MCF 10A (cell line): ENCODE measurements at regions of chr11 and their contacts with region 1.

Region 1: DNA sequence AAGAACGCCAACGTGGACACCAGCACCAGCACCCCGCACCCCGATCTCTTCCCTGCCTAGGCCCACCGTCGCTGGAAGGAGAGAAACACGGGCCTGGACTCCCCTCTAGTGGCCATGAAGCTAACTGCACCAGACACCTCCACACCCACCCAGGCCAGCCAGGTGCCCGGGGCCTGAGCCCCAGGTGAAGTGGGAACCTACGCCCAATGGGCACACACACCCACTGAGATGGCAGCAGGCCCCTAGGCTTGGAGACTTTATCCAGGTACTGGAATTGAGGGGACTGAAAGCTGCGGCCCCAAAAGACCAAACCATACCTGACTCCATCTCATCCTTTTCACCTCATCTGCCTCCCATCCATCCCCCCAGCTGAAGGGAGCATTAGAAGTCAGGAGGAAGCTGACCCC is 81.0 kb downstream of the BUD13 start:
- DNase-seq: peak; percentile 57
- H3K4me3 Mint-ChIP-seq: no peak overlapping the region
- H3K27ac Mint-ChIP-seq: no peak overlapping the region
- H3K4me1 Mint-ChIP-seq: peaks cover 17% of the 10 kb centered on the region
- H3K27me3 Mint-ChIP-seq: peaks cover 17% of the 10 kb centered on the region
- CTCF ChIP-seq: peak; percentile 92

Region 2: DNA sequence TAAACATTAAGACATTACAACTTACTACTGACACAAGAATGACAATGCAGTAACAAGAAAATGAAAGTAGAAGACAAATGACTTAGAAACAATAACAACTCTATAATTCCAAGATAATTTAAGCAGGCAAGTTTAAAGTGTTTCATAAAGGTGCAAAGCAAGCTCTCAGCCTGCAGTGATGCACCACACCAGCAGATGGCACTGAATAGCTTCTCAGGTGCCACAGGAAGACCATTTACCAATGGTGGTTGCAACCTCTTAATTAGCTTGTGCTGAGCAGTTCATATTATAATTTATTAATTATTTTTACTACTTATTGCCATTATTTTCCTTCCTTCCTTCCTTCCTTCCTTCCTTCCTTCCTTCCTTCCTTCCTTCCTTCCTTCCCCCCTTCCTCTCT is 1952.8 kb before region 1 on chr11:
- CTCF ChIA-PET with region 1: interaction called, 4 read pairs
- POLR2A ChIA-PET with region 1: no interaction called
- intact Hi-C with region 1: loop called (anchors 1 kb)
- DNase-seq: peak; percentile 63
- H3K4me3 Mint-ChIP-seq: no peak overlapping the region
- H3K27ac Mint-ChIP-seq: no peak overlapping the region
- H3K4me1 Mint-ChIP-seq: no peaks in the 10 kb centered on the region
- H3K27me3 Mint-ChIP-seq: peaks cover 20% of the 10 kb centered on the region
- CTCF ChIP-seq: peak; percentile 76

Region 3: DNA sequence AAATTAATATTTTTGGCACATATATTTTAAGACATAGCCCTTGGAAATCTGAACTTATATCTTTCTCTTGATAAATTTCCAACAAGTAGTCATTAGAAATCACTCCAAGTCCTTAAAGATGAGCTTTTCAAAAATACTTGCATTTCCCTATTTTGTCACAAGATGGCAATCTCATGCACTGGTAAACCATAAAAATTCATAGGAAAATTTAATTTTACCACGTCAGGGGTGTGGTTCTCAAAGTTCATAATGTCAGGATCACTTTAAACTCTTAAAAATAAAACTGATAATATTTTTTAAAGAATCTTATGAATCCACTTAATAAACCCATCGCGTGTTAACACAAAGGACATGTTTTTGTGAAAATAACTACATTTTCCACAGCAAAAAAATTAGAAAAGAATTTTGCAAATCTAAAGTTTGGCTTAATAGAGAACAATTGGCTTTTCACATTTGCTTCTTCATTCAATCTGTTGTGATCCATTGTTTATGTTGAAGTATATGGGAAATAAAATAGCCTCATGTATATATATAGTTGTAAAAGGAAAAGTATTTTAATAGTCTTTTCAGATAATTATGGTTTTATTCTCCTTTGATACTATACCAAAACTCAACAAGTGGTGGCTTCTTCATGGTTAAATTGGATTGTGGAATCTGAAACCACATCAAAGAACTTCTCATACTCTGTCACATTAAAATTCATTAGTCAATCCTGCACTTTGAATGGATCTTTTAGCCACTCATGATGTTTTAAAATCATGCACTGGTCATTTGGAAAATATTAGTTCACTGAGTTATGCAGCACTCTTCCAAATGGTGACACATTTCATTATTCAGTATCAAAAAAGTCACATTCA is 1356.6 kb before region 1 on chr11:
- CTCF ChIA-PET with region 1: interaction called, 14 read pairs
- POLR2A ChIA-PET with region 1: no interaction called
- intact Hi-C with region 1: loop called (anchors 2 kb)
- DNase-seq: peak; percentile 31
- H3K4me3 Mint-ChIP-seq: no peak overlapping the region
- H3K27ac Mint-ChIP-seq: no peak overlapping the region
- H3K4me1 Mint-ChIP-seq: no peaks in the 10 kb centered on the region
- H3K27me3 Mint-ChIP-seq: peaks cover 35% of the 10 kb centered on the region
- CTCF ChIP-seq: peak; percentile 48

Region 4: DNA sequence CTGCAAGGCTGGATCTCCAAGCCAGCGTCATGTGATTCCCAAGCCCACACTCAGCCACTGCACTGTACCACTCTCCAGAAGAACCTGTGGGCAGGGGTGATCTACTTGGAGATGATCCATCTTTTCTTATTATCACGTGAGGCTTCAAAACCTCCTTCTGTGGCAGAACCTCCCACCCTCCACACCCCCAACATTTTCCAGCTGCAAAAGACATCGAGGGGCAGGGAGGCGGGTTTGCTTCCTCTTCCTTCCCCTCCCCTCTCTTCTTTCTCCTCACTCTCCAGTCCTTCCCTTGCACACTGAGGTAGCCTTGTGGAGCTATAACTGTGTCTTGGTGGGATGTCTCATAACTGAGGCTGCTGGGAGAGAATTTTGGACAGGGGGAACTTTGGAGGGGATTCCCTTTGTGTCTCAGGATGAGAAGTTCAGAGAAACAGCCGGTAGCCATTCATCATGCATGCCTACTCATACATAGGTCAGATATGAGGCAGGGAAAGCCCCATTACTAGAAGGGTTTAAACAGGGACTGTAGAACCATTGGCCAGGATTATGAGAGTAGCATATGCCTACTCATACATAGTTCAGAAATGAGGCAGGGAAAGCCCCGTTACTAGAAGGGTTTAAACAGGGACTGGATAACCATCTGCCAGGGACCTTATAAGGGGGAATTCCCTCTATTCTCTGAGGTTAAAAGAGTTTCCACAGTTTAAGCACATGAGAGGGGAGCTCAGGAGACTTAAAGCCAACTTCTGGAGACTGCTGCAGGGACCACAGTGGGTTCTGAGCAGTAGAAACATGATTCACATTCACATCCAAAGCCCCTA is 766.8 kb before region 1 on chr11:
- CTCF ChIA-PET with region 1: no interaction called
- POLR2A ChIA-PET with region 1: no interaction called
- intact Hi-C with region 1: no loop called
- DNase-seq: no peak
- H3K4me3 Mint-ChIP-seq: no peak overlapping the region
- H3K27ac Mint-ChIP-seq: no peak overlapping the region
- H3K4me1 Mint-ChIP-seq: no peaks in the 10 kb centered on the region
- H3K27me3 Mint-ChIP-seq: no peaks in the 10 kb centered on the region
- CTCF ChIP-seq: no peak

Region 5: GRCh38 chr11:116513894-116514293 is 177.9 kb before region 1 on chr11:
- CTCF ChIA-PET with region 1: interaction called, 6 read pairs
- POLR2A ChIA-PET with region 1: no interaction called
- intact Hi-C with region 1: loop called (anchors 5 kb)
- DNase-seq: peak; percentile 70
- H3K4me3 Mint-ChIP-seq: no peak overlapping the region
- H3K27ac Mint-ChIP-seq: no peak overlapping the region
- H3K4me1 Mint-ChIP-seq: no peaks in the 10 kb centered on the region
- H3K27me3 Mint-ChIP-seq: peaks cover 42% of the 10 kb centered on the region
- CTCF ChIP-seq: peak; percentile 41

Region 6: DNA sequence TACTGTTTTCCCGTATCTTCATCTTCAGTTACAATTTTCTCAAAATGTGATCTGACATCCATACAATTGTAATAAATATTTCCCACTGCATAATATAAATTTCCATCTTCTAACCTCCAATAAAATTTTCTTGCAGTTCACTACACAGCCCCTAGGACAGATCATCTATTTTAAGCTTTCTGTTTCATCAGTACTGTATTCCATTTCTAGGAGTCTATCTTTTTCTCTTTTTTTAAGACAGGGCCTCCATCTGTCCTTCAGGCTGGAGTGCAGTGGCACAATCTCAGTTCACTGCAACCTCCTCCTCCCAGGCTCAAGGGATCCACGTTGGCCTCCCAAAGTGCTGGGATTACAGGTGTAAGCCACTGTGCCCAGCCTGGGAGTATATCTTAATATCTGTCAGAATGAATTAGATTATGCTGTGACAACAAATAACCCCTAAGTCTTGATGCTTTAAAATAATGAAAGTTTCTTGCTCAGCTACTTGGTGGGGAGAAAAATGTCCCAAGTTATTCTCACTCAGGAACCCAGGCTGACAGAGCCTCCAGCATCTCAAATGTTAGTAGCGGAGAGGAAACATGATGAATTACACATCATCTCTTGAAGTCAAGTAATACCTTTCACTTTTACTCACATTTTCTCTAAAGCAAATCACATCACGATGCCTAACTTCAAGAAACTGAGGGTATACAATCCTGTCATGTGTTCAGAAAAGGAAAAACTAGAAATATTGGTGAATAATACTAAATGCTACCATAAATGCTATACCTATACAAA is 11.2 kb before region 1 on chr11:
- CTCF ChIA-PET with region 1: interaction called, 17 read pairs
- POLR2A ChIA-PET with region 1: no interaction called
- intact Hi-C with region 1: no loop called
- DNase-seq: no peak
- H3K4me3 Mint-ChIP-seq: no peak overlapping the region
- H3K27ac Mint-ChIP-seq: no peak overlapping the region
- H3K4me1 Mint-ChIP-seq: no peaks in the 10 kb centered on the region
- H3K27me3 Mint-ChIP-seq: peaks cover 41% of the 10 kb centered on the region
- CTCF ChIP-seq: no peak